Cardiac septum (tissue), 1 donor: ENCODE measurements at regions of chr20 and their contacts with region 1.

Region 1: DNA sequence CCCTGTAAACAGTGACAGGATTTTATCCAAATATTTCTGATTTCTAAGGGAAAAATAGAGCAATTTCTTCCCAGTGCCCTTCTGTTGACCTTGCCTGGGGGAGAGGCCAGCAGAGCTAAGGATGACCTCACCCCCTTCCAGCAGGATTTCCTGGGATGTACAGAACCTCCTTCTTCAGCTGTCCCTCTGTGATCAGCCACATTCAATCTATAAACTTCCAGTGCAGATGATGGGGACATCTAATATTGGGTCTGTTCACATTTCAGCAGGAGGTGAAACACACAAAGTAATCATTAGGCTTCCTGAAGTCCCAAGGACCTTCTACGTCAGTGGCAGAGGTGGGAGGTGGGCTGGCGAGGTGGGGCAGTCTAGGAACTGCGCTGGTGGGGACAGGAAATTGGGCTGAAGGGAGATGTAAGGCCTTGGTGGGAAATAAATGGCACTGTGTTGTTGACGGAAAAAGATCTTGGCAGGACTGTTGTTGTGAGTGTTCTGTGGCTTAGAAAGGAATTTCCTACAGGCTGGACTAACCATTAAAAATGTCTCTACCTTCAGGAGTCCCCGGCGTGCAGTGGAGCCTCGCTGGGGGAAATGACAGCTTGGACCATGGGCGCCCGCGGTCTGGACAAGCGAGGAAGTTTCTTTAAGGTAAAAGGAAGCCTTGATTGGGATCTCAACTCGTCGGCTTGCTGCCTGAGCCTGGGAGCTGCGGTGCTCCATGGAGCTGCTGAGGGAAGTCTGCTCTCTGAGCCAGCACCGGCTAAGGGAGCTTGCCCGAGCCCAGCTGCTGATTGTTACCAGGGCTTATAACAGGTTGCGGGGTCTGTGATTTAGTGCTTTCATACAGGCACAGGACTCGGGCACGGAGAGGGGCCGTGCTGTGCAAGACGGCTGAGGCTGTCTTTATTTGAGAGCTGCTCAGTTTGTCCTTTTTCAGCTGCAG is 127.9 kb upstream of the NAA20 start:
- DNase-seq: peak; percentile 78

Region 2: DNA sequence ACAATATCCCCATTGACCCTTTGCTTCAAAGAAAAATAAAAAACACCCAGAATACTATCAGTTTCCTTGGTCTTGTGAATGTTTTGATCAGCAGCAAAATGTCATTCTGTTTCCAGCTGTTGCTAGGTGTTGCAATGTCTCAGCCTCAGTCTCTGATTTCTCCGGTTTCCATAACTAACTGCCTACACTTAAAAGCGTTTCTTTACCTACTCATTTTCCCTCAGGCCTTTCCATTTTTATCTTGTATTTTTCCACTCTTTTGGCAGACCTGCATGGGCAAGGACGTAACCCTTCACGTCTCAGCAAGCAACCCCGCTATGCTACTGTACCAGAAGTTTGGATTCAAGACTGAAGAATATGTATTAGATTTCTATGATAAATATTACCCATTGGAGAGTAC is 1702.3 kb before region 1 on chr20:
- intact Hi-C with region 1: no loop called
- DNase-seq: no peak

Region 3: DNA sequence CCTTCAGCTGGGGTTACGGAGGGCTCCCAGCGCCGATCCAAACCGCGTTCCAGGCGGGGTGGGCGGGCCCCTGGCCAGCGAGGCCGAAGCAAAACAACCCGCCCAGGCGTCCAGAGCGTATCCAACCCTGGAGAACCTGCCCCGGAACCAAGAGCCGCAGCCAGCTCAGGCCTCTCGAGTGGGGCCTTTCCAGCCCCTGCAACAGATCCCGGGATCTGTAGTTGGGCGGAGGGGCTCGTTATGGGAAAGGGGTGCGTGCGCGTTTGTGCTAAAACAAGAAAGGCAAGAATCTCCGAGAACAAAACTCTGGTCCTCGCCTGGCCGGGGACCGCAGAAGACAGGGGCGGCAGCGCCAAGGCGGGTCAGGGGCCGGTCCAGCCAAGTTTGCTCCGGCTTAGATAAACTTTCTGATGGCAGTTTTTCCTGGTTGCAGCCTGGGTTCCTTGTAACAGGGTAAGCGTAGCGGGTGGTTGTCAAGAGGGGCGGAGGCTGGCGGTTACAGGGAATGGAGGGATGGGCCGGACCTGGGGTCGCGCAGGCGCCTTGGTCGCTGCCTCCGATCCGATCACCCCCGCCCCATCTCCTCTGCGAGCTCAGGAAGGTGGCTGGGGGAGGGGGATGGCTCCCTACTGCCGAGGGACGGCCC is 131.7 kb before region 1 on chr20:
- intact Hi-C with region 1: loop called (anchors 2 kb)
- DNase-seq: peak; percentile 94

Region 4: GRCh38 chr20:19815553-19815991 is 73.7 kb before region 1 on chr20:
- intact Hi-C with region 1: loop called (anchors 5 kb)
- DNase-seq: no peak

Region 5: GRCh38 chr20:19974626-19975435 is 85.5 kb after region 1 on chr20:
- intact Hi-C with region 1: loop called (anchors 5 kb)
- DNase-seq: peak; percentile 92